ENCODE measurements at regions of chr12 and their contacts with region 1.

Region 1: GRCh38 chr12:52879394-52880351 is 25.2 kb downstream of the KRT8 start:
- DNase-seq: peak; percentile 82
- ATAC-seq: peak; percentile 95
- H3K4me3 Mint-ChIP-seq: peak overlapping the region; percentile 54
- H3K27ac Mint-ChIP-seq: no peak overlapping the region
- H3K4me1 Mint-ChIP-seq: peaks cover 5% of the 10 kb centered on the region
- H3K27me3 Mint-ChIP-seq: peaks cover 6% of the 10 kb centered on the region
- CTCF ChIP-seq: peak; percentile 92

Region 2: DNA sequence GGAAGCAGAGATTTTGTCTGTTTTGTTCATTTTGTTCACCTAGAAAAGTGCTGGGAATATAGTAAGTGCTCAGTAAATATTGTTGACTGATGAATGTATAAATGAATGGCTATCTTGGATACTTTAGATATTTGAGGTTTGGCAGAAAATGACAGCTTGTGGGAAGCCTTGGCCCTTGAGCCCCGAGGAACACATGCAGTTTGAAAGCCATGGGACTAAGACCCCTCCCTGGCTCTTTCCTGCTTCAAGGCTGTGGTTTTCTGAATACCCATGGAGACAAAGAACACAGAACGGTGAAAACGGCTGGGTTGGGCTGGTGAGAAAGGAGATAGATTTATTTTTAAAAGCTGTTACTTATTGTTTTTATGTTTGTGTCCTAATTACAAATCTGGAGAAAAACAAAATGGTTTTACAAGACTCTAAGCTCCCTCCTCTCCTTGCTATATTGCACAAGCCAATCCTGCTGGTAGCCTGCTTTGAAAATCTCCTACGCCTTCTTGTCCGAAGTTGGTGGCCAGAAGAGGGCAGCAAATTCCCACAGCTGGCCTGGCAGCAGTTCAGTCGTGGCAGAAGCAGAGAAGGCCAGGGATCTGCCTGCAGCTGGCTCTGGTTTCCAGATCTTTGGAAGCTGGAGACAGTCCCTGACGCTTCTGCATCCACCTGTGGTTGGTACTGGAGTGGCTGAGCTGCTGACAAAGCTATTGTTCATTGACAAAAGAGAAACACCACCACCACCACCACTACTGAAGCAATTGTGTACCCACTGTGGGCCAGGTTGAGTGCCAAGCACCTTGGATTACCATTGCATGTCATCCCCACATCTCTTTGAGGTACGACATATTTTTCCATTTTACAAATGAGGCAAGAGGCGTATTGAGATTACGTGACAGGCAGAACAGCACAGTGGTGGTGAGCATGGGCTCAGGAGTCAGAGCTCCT is 507.2 kb before region 1 on chr12:
- CTCF ChIA-PET with region 1: interaction called, 32 read pairs
- POLR2A ChIA-PET with region 1: no interaction called
- intact Hi-C with region 1: loop called (anchors 10 kb)
- DNase-seq: peak; percentile 73
- ATAC-seq: peak; percentile 56
- H3K4me3 Mint-ChIP-seq: no peak overlapping the region
- H3K27ac Mint-ChIP-seq: no peak overlapping the region
- H3K4me1 Mint-ChIP-seq: no peaks in the 10 kb centered on the region
- H3K27me3 Mint-ChIP-seq: peaks cover 3% of the 10 kb centered on the region
- CTCF ChIP-seq: peak; percentile 50

Region 3: DNA sequence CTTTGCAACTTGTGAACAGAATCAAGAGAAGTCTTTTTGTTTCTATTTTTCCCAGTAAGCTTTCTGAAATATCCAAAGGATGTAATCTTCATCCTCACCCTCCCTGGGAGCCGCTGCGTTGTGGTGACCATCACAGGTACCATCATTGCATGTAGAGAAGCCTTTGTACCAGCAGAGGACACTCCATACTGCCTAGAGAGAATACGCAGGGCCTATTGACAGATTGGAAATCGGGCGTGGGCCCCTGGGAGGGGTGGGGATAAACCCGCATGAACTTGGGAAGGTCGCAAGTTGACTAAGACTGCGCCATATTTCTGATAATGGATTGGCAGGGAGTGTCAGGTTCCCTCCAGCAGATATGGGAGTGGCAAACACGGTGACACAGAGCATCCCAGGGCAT is 212.2 kb before region 1 on chr12:
- CTCF ChIA-PET with region 1: interaction called, 16 read pairs
- POLR2A ChIA-PET with region 1: no interaction called
- intact Hi-C with region 1: no loop called
- DNase-seq: no peak
- ATAC-seq: no peak
- H3K4me3 Mint-ChIP-seq: no peak overlapping the region
- H3K27ac Mint-ChIP-seq: no peak overlapping the region
- H3K4me1 Mint-ChIP-seq: no peaks in the 10 kb centered on the region
- H3K27me3 Mint-ChIP-seq: no peaks in the 10 kb centered on the region
- CTCF ChIP-seq: no peak

Region 4: DNA sequence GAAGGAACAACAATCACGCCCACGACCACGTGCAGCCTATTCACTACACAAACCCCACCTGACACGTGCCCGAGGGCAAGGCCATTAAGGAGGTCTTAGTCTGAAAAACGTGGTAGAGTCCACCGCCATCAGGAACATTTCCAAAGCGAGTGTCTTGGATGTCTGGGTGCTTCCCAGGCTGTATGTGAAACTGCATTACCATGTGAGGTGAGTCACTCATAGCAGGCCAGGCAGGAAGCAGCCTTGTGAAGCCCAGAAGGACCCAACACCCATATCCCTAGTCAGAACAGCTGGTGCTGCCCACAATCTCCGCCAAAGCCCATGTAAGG is 42.3 kb before region 1 on chr12:
- CTCF ChIA-PET with region 1: interaction called, 19 read pairs
- POLR2A ChIA-PET with region 1: interaction called, 3 read pairs
- intact Hi-C with region 1: no loop called
- DNase-seq: peak; percentile 39
- ATAC-seq: no peak
- H3K4me3 Mint-ChIP-seq: no peak overlapping the region
- H3K27ac Mint-ChIP-seq: peak overlapping the region; percentile 90
- H3K4me1 Mint-ChIP-seq: peaks cover 42% of the 10 kb centered on the region
- H3K27me3 Mint-ChIP-seq: peaks cover 1% of the 10 kb centered on the region
- CTCF ChIP-seq: no peak

Region 5: GRCh38 chr12:52949413-52950331 is 70.0 kb after region 1 on chr12:
- CTCF ChIA-PET with region 1: interaction called, 67 read pairs
- POLR2A ChIA-PET with region 1: interaction called, 4 read pairs
- intact Hi-C with region 1: no loop called
- DNase-seq: no peak
- ATAC-seq: no peak
- H3K4me3 Mint-ChIP-seq: peak overlapping the region; percentile 57
- H3K27ac Mint-ChIP-seq: no peak overlapping the region
- H3K4me1 Mint-ChIP-seq: no peaks in the 10 kb centered on the region
- H3K27me3 Mint-ChIP-seq: peaks cover 2% of the 10 kb centered on the region
- CTCF ChIP-seq: no peak